AG04449 (cell line): ENCODE measurements at regions of chr14 and their contacts with region 1.

Region 1: GRCh38 chr14:75088574-75089373 is 19.3 kb downstream of the ZC2HC1C start:
- DNase-seq: no peak
- H3K4me3 ChIP-seq: no peak overlapping the region
- CTCF ChIP-seq: peak; percentile 60

Region 2: DNA sequence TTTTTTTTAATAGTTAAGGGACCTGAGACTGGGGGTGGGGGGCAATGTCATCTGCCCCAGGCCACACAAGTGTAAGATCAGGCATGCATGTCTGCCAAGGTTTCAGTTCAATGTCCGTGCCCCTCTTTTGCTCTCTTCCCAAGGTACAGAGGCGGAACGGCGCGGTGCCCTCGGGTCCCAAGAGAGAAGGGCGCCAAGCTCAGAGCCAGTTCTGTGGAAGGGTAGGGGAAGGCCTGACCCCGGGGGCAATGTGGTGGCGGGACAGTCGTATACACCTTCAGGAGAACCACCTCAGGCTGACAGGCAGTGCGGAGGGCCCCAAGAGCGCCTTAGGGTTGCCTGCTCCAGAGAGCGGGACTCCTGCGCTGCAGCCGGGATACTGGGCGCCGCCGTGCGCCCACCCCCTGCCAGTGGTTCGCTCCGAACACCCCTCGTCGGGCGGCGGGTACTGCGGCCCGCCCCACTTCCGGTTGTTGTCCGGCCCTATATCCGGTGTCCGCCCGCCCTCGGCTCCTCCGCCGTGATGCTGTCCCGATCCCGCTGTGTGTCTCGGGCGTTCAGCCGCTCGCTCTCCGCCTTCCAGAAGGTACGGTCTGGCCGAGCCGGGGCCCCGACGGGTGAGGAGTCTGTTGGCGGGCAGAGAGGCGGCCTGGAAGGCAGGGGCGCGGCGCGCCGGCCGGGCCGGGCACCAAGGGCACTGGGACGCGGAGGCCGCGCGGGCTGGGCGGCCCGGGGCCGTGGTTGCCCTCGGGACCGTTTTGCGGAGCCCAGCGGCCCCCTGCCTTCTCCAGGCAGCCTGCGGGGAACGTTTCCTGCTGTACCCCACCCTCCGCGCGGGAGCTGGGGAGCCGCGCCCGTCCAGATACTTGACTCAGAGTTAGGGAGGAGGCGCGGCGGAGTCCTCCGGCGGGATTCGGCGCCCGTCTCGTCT is 207.1 kb before region 1 on chr14 and contains the start of gene DLST:
- CTCF ChIA-PET with region 1: interaction called, 13 read pairs
- POLR2A ChIA-PET with region 1: no interaction called
- DNase-seq: no peak
- H3K4me3 ChIP-seq: peak within 1 kb of the TSS; percentile 91
- CTCF ChIP-seq: no peak

Region 3: DNA sequence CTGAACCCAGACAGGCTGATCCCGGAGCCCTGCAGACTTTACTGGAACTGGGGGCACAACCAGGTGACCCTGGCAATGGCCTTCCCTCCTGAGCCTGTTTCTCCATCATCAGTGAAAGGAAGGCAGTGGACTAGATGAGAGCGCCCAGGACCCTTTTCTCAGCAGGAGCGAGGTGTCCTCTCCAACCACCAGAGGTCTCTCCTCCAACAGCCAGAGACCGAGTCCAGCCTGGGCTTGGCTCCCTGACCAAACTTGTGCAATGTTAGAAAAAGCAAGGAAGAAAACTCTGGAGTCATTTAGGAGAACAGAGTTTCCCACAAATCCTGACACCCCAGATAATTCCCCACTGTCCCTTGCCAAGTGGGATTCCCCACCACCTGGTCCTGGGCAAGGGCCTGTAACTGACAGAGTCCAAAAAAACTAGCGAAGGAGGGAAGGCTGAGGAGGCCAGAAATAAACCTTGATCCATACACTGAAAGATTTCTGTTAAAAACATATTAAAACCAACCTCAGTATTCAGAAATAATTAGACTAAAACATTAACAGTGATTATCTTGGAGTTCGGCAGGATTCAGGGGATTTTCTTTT is 174.7 kb before region 1 on chr14:
- CTCF ChIA-PET with region 1: interaction called, 296 read pairs
- POLR2A ChIA-PET with region 1: no interaction called
- DNase-seq: no peak
- H3K4me3 ChIP-seq: no peak overlapping the region
- CTCF ChIP-seq: peak; percentile 95

Region 4: GRCh38 chr14:74945823-74946682 is 142.7 kb before region 1 on chr14:
- CTCF ChIA-PET with region 1: interaction called, 182 read pairs
- POLR2A ChIA-PET with region 1: no interaction called
- DNase-seq: no peak
- H3K4me3 ChIP-seq: no peak overlapping the region
- CTCF ChIP-seq: peak; percentile 95

Region 5: DNA sequence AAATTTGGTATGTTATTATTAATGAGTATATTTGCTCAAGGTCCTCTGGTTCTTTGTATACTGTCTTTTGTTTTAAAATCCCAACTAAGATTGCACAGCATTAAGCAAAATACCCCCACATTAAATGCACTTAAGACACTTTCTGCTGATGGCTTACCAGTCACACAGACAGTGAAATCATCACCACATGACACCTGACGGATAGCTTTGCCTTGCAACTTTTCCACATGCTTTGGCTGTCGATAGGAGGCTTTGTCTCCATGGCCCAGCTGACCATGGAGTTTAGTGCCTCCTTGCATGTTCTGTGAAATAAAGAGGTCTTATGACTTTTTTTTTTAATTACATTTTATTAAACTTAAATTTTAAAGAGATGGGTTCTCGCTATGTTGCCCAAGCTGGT is 18.4 kb after region 1 on chr14:
- CTCF ChIA-PET with region 1: interaction called, 50 read pairs
- POLR2A ChIA-PET with region 1: no interaction called
- DNase-seq: no peak
- H3K4me3 ChIP-seq: no peak overlapping the region
- CTCF ChIP-seq: no peak